Astrocyte of the cerebellum (primary cell): ENCODE measurements at regions of chr7 and their contacts with region 1.

Region 1: DNA sequence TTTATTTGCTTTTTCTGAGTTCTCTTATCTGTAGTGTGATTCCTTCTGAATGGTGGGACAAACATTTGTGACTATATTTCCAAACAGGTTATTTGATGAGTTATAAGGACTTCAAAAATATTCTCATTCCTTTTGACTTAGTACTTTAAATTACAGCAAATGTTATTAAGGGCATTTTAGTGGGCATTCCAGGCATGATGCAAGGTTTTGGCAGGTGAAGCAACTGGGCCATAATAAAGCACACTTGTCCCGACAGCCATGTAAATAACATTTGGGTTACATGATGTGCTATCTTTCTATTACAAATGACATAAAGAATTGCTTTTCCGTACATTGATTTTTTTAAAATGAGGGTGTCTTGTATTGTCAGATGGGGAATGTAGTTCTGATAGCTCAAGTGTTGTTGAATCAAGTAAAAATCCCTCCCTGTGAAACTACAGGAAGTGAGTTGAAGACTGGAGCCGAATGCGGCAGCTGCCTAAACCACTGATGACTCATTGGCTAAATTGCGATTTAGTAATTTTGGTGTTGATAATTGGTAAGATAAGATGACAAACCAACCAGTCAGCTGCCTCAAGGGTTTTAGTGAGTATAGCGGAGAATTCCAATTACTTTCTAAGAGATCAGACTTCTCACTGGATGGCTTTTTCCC is 231.3 kb upstream of the NPY start:
- DNase-seq: peak; percentile 53
- H3K4me3 ChIP-seq: no peak overlapping the region
- CTCF ChIP-seq: no peak

Region 2: GRCh38 chr7:23971031-23971430 is 81.7 kb before region 1 on chr7:
- in situ Hi-C with region 1: loop called (anchors 5 kb)
- DNase-seq: no peak
- H3K4me3 ChIP-seq: no peak overlapping the region
- CTCF ChIP-seq: no peak

Region 3: GRCh38 chr7:24017519-24017918 is 35.2 kb before region 1 on chr7:
- in situ Hi-C with region 1: loop called (anchors 5 kb)
- DNase-seq: no peak
- H3K4me3 ChIP-seq: no peak overlapping the region
- CTCF ChIP-seq: no peak